Calu3 (cell line): ENCODE measurements at regions of chr17 and their contacts with region 1.

Region 1: GRCh38 chr17:48878918-48879898 is 13.4 kb upstream of the ATP5MC1 start:
- DNase-seq: peak; percentile 77
- H3K4me3 Mint-ChIP-seq: no peak overlapping the region
- H3K27ac Mint-ChIP-seq: no peak overlapping the region
- H3K4me1 Mint-ChIP-seq: no peaks in the 10 kb centered on the region
- H3K27me3 Mint-ChIP-seq: no peaks in the 10 kb centered on the region
- CTCF ChIP-seq: peak; percentile 96

Region 2: DNA sequence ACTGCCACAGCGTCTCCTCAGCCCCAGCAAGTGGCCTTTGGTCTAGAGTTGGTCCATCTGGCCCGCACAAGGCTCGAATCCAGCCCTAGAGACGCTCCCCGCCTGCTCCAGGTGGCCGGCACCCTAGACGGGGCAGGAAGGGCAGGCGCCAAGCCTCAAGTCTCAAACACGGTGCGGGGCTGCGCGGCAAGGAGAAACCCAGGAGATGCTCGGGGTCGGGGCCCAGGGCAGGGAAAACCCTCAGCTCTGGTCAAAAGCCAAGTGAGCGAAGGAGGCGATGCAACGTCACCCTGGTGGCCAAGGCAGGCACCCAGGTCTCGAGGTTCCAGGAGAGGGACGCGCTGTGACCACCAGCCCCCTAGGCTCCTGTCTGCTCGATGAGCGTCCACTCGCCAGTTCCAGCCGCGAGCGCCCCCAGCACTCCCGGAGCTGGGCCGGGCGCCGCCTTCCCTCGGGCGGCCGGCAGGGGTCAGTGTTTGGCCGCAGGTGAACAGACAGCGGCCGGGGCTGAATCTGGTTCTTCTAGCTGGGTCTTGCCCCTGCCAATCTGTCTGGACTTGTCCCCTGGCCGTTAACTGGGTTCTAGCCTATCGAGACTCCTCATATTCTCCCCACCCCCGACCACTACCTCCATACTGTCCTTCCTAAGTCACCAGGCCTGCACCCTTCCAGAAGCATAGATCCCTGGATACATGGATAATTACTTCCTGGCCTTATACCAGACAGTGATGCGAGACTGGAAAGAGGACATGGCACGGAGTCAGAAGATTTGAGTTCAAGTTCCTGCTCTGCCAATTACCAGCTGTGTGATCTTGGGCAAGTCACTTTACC is 200.9 kb before region 1 on chr17:
- CTCF ChIA-PET with region 1: interaction called, 106 read pairs
- intact Hi-C with region 1: loop called (anchors 1 kb)
- DNase-seq: peak; percentile 92
- H3K4me3 Mint-ChIP-seq: peak overlapping the region; percentile 10
- H3K27ac Mint-ChIP-seq: no peak overlapping the region
- H3K4me1 Mint-ChIP-seq: no peaks in the 10 kb centered on the region
- H3K27me3 Mint-ChIP-seq: no peaks in the 10 kb centered on the region
- CTCF ChIP-seq: peak; percentile 99

Region 3: GRCh38 chr17:48724251-48725003 is 154.8 kb before region 1 on chr17:
- CTCF ChIA-PET with region 1: interaction called, 82 read pairs
- intact Hi-C with region 1: loop called (anchors 1 kb)
- DNase-seq: peak; percentile 96
- H3K4me3 Mint-ChIP-seq: peak overlapping the region; percentile 34
- H3K27ac Mint-ChIP-seq: no peak overlapping the region
- H3K4me1 Mint-ChIP-seq: peaks cover 21% of the 10 kb centered on the region
- H3K27me3 Mint-ChIP-seq: peaks cover 45% of the 10 kb centered on the region
- CTCF ChIP-seq: peak; percentile 94

Region 4: DNA sequence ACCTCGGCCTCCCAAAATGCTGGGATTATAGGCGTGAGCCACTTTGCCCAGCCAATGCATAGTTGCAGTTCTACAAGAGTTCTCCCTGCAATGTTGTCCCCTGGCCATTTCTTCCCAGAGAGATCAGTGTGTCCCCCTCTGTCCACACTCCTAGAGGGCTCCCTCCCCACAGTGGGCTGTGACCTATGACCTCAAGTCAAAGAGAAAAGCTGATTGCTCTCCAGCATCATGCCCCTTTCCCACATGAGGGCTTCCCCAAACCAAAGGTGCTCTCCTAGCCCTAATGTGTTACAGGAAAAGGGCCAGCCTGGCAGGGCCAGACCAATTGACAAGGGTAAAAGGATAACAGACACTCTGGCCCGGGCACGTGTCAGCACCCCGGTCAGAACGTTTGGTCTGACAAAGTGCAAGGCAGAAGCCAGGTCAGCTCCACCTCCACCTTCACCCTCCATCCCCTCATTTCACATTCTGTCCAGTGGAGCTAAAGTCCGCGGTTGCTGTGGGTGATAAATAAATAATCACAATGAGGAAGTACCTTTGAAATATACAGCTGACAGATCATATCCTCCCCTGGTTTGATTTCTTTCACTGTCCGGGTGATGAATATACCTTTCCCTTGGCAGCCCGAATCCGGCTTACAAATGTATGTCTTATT is 80.0 kb before region 1 on chr17:
- CTCF ChIA-PET with region 1: interaction called, 84 read pairs
- intact Hi-C with region 1: no loop called
- DNase-seq: peak; percentile 57
- H3K4me3 Mint-ChIP-seq: no peak overlapping the region
- H3K27ac Mint-ChIP-seq: peak overlapping the region; percentile 72
- H3K4me1 Mint-ChIP-seq: peaks cover 40% of the 10 kb centered on the region
- H3K27me3 Mint-ChIP-seq: no peaks in the 10 kb centered on the region
- CTCF ChIP-seq: no peak

Region 5: DNA sequence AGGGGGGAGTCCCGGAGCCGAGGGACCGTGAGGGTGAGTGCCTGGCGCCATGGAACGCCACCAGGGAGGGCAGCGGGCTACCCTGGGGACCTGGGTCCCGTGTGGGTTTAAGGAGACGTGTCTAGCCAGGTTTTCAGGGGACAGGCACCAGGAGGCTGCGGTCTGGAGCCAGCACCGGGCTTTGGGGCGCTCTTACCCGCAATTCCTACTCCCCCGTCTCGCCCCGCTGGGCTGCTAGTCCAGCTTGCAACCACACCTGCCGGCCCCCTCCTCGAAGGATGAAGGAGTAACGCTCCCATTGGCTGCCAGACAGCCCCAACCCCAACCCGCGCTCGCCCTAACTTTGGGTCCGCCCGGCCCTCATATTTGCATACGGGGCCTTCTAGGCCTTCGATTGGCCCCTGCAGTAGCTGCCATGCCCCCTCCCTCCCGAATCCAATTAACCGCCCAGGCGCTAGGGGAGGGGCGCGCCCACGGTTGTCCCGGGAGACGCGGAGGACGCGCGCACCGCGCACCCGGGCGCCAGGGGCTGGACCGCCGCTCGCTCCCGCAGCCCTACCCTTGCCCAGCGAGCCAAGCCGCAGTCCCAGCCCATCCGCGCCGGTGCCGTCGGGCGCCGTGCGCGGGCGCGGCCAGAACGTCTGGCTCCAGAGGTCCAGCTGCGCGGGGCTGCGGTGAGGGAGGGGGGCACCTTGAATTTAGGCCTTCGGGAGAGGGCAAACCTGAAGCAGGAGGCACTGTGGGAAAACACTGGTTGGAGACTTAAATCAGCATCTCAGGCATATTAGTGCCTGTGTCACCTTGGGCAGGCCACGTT is 62.2 kb before region 1 on chr17 and contains the start of gene TTLL6:
- CTCF ChIA-PET with region 1: interaction called, 74 read pairs
- intact Hi-C with region 1: loop called (anchors 2 kb)
- DNase-seq: peak; percentile 96
- H3K4me3 Mint-ChIP-seq: peak within 1 kb of the TSS; percentile 71
- H3K27ac Mint-ChIP-seq: no peak within 1 kb of the TSS
- H3K4me1 Mint-ChIP-seq: peaks cover 10% of the 10 kb centered on the region
- H3K27me3 Mint-ChIP-seq: peaks cover 23% of the 10 kb centered on the region
- CTCF ChIP-seq: no peak
- total RNA-seq, gene TTLL6: 0.21 and 0.78 TPM in 2 replicates